SK-N-SH (cell line): ENCODE measurements at regions of chr16 and their contacts with region 1.

Region 1: GRCh38 chr16:12262454-12263180 is 286.1 kb downstream of the SNX29 start:
- DNase-seq: no peak
- H3K4me3 ChIP-seq: no peak overlapping the region
- H3K27ac ChIP-seq: no peak overlapping the region
- H3K4me1 ChIP-seq: no peaks in the 10 kb centered on the region
- H3K27me3 ChIP-seq: no peaks in the 10 kb centered on the region
- CTCF ChIP-seq: no peak
- EP300 ChIP-seq: no peak
- RAD21 ChIP-seq: no peak

Region 2: GRCh38 chr16:12228602-12229499 is 33.8 kb before region 1 on chr16:
- CTCF ChIA-PET with region 1: interaction called, 13 read pairs
- POLR2A ChIA-PET with region 1: interaction called, 3 read pairs
- DNase-seq: peak; percentile 63
- H3K4me3 ChIP-seq: no peak overlapping the region; a peak in 1 of 4 replicates
- H3K27ac ChIP-seq: peak overlapping the region; percentile 8 to 44; a peak in 1 of 4 replicates
- H3K4me1 ChIP-seq: peaks cover 8% of the 10 kb centered on the region in 2 experiments; a peak in 2 of 4 replicates
- H3K27me3 ChIP-seq: no peaks in the 10 kb centered on the region
- CTCF ChIP-seq: peak; percentile 66
- EP300 ChIP-seq: no peak
- RAD21 ChIP-seq: peak; percentile 58